ENCODE measurements at regions of chr12 and their contacts with region 1.

Region 1: DNA sequence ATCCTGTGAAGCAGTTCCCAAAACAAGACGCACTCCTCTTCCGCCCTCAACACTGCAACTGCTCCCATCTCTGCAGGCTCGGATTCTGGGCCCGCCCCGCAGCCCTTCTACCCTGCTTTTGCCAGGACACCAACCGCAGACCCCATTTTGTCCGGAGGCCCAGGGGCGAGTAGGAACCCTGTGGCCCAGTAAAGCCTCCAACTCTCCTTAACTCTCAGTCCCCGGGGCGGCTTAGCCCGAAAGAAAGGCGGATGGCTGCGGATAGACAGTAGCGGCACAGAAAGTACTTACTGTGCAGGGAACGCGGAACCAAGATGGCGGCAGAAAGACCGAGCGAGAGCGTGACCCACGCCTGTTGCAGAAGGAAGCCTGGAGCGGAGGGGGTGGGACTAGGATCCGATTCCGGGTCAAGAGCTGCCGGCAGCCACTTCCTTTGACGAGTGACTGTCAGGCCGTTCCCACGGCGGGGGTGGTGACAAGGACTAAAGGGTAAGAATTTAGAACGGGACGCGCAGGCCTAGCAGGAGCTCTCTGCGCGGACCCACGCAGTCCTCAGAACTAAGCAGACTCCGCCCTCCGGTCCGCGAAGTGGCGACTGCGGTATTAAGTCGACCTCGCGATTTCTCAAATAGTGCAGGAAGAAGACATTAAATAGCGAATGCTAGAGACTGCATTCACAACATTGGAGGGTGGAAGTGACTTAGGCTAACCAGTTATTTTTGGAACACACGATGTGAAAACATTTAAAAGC is at the start of gene NACA:
- DNase-seq: peak; percentile 90 to 99 (median 96)
- ATAC-seq: peak; percentile 91 to 92
- H3K4me3 Mint-ChIP-seq: peak within 1 kb of the TSS; percentile 92 to 98 (median 96)
- H3K27ac Mint-ChIP-seq: peak within 1 kb of the TSS; percentile 97 to 99 (median 98)
- H3K4me1 Mint-ChIP-seq: peaks cover 34 to 60% (median 53%) of the 10 kb centered on the region in 4 donors
- H3K27me3 Mint-ChIP-seq: no peaks in the 10 kb centered on the region
- polyA plus RNA-seq, gene NACA: 1,330 to 1,441 (median 1,344) TPM

Region 2: GRCh38 chr12:56630160-56630632 is 95.0 kb before region 1 on chr12 and contains the start of gene BAZ2A:
- POLR2A ChIA-PET with region 1: interaction called, 29 read pairs
- DNase-seq: peak; percentile 68 to 88 (median 78)
- ATAC-seq: peak; percentile 68 to 74
- H3K4me3 Mint-ChIP-seq: peak within 1 kb of the TSS; percentile 83 to 99 (median 94)
- H3K27ac Mint-ChIP-seq: peak within 1 kb of the TSS; percentile 89 to 97 (median 95)
- H3K4me1 Mint-ChIP-seq: peaks cover 36 to 83% (median 76%) of the 10 kb centered on the region in 4 donors
- H3K27me3 Mint-ChIP-seq: no peaks in the 10 kb centered on the region
- polyA plus RNA-seq, gene BAZ2A: 14.3 to 29.5 (median 24.1) TPM

Region 3: DNA sequence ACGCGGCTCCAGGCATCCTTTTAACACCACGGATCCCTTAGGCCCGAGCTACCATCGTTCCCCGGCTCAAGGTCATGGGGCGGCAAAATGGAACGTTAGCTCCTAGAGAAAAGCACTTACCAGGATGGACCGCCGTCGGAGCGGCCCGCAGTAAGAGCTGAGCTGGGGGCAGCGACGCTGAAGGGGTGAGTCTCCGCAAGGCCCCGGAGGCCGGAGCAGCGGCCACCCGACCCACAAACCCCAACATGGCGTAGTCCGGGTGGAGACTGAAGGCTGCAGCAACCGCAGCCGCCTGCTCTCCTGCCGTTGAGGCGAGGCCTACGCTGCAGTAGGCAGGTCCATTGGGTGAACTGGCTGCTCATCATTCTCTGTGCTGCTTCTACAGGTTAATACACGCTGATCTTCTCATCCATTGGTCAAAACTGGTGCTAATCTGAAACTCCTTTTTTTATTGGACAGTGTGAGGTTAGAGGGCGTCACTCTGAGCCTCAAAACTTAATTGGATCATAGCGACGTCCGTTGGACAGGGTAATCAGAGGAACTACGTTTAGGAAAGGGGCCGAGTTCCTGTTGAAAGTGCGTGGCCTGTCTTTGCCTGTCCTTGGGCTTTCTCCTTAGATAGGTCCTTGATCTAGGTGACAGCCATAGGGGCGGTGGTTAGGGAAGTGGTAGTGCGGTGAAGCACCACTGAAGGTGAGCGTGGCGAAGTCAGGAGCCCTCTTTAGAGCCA is 79.3 kb before region 1 on chr12 and contains the start of gene ATP5F1B:
- POLR2A ChIA-PET with region 1: interaction called, 30 read pairs
- DNase-seq: peak; percentile 75 to 97 (median 89)
- ATAC-seq: peak; percentile 93 to 97
- H3K4me3 Mint-ChIP-seq: peak within 1 kb of the TSS; percentile 79 to 98 (median 95)
- H3K27ac Mint-ChIP-seq: peak within 1 kb of the TSS; percentile 90 to 100 (median 98)
- H3K4me1 Mint-ChIP-seq: peaks cover 11 to 42% (median 39%) of the 10 kb centered on the region in 4 donors
- H3K27me3 Mint-ChIP-seq: no peaks in the 10 kb centered on the region
- polyA plus RNA-seq, gene ATP5F1B: 724 to 879 (median 771) TPM

Region 4: DNA sequence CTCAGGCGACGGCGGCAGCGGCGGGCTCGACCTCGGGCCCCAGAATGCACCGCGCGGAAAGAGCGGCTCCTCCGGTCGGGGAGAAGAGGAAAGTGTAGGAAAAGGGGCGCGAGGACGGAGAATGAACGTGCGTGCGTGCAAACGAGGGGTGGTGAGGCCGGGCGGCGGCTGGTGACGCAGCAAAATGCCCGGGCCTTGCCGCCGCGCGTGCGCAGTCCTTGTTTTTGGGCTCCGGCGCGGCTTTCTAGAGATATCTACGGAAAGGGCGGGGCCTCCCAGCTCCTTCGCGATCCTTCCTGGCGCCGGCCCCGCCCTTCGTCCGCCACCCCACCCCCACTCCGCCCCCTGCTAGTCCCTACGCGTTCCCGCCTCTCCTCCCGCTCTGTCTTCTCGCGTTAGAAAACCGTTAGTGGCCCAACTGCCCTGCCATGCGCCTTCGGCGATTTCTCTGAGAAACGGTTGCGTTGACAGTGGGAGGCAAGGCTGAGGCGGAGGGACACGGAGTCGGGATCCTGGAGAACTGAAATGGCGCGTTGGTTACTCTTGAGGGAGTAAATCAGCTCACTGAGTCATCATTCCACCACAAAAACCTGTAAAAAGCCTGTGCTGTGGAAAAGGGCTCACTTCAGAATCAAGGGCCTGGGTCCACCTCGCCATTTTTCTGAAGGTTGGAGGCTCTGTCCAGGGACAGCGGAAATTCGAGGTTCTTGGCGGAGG is 36.9 kb before region 1 on chr12 and contains the start of gene PTGES3:
- POLR2A ChIA-PET with region 1: interaction called, 110 read pairs
- DNase-seq: peak; percentile 95 to 99 (median 97)
- ATAC-seq: peak; percentile 59 to 63
- H3K4me3 Mint-ChIP-seq: peak within 1 kb of the TSS; percentile 94 to 100 (median 99)
- H3K27ac Mint-ChIP-seq: peak within 1 kb of the TSS; percentile 97 to 100 (median 98)
- H3K4me1 Mint-ChIP-seq: peaks cover 18 to 41% (median 36%) of the 10 kb centered on the region in 4 donors
- H3K27me3 Mint-ChIP-seq: peaks cover 0 to 2% (median 0%) of the 10 kb centered on the region in 5 donors
- polyA plus RNA-seq, gene PTGES3: 229 to 236 (median 234) TPM

Region 5: GRCh38 chr12:56803750-56804149 is 78.6 kb after region 1 on chr12:
- POLR2A ChIA-PET with region 1: no interaction called
- DNase-seq: no peak
- ATAC-seq: no peak
- H3K4me3 Mint-ChIP-seq: no peak overlapping the region
- H3K27ac Mint-ChIP-seq: no peak overlapping the region
- H3K4me1 Mint-ChIP-seq: peaks cover 0 to 2% (median 0%) of the 10 kb centered on the region in 4 donors
- H3K27me3 Mint-ChIP-seq: no peaks in the 10 kb centered on the region

Region 6: GRCh38 chr12:57078519-57079404 is 353.6 kb after region 1 on chr12 and contains the start of gene NEMP1:
- POLR2A ChIA-PET with region 1: interaction called, 15 read pairs
- DNase-seq: peak; percentile 81 to 99 (median 96)
- ATAC-seq: peak; percentile 93 to 94
- H3K4me3 Mint-ChIP-seq: peak within 1 kb of the TSS; percentile 92 to 99 (median 94)
- H3K27ac Mint-ChIP-seq: peak within 1 kb of the TSS; percentile 89 to 97 (median 92)
- H3K4me1 Mint-ChIP-seq: peaks cover 3 to 36% (median 19%) of the 10 kb centered on the region in 4 donors
- H3K27me3 Mint-ChIP-seq: no peaks in the 10 kb centered on the region
- polyA plus RNA-seq, gene NEMP1: 2.6 to 5.5 (median 4.1) TPM

Measured in naive thymus-derived CD8-positive, alpha-beta T cell (primary cell).